Cardiac septum (tissue), 1 donor: ENCODE measurements at regions of chr6 and their contacts with region 1.

Region 1: GRCh38 chr6:116764961-116765851 is at the start of gene FAM162B:
- DNase-seq: peak; percentile 76
- total RNA-seq, gene FAM162B: 2.7 TPM

Region 2: DNA sequence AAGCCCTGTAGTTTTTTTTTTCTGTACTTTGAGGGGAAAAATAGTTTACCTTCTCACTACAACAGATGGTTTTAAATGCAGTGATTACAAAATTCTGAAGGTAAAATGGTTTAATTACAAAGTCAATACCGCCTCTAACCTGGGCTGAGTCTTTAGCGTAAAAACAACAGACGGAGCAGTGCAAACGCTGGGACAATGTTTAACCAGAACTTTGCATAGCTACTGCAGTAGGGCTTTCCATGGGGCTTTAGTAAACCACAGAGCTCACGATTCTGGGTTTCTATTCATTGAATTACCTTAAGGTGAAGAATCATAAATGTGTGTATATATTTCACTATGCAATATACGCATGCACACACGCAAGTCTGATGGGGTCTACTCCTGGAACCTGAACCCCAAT is 189.7 kb after region 1 on chr6:
- intact Hi-C with region 1: loop called (anchors 10 kb)
- DNase-seq: no peak